Activated T-helper 2 cell treated with anti-CD3 and anti-CD28 coated beads, Interferon-gamma antibody, Interleukin-2, Interleukin-4, amounts not matched to agents 10 μg/mL and 5 μg/mL and 100 μg/mL, durations not matched to agents 14 hours and 24 hours and 36 hours (primary cell): ENCODE measurements at regions of chr16 and their contacts with region 1.

Region 1: DNA sequence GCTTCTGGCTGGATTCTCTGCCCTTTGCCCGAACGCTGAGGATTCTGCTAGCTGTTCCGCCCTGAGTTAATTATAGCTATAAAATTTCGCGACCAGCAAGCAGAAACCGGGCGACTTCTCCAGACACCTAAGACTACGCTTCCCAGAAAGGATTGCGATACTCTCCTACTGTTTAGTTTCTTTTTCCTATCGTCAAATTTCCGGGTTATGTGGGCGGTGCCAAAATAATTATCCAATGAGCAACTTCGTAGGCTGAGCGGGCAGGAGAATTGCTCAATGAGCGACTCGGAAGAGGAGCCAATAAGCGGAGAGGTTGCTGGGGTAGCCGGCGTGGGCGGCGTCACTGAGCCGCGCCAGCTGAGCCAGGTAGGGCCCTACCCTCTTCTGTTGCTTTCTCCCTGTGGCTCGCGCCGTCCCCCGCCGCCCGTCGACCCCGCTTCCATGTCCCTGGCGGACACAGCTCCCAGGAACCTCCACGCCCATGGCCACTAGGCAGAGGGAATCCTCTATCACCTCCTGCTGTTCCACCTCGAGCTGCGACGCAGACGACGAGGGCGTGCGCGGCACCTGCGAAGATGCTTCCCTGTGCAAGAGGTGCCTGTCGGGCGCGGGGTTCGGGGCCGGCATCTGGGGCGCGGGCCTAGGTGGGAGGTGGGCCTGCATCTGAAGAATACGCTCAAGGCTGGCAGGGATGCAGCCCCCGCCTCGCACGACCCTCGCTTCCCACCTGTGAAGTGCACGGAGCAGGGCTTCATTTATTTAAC is at the start of gene LCMT1:
- DNase-seq: peak; percentile 91
- H3K4me3 Mint-ChIP-seq: peak within 1 kb of the TSS; percentile 95
- H3K27ac Mint-ChIP-seq: peak within 1 kb of the TSS; percentile 98
- H3K4me1 Mint-ChIP-seq: peaks cover 45% of the 10 kb centered on the region
- H3K27me3 Mint-ChIP-seq: no peaks in the 10 kb centered on the region
- total RNA-seq, gene LCMT1: 34.1 and 38.6 TPM in 2 replicates

Region 2: GRCh38 chr16:25031441-25032307 is 79.9 kb before region 1 on chr16:
- intact Hi-C with region 1: loop called (anchors 1 kb)
- DNase-seq: peak; percentile 89
- H3K4me3 Mint-ChIP-seq: peak overlapping the region; percentile 92
- H3K27ac Mint-ChIP-seq: peak overlapping the region; percentile 99
- H3K4me1 Mint-ChIP-seq: peaks cover 30% of the 10 kb centered on the region
- H3K27me3 Mint-ChIP-seq: no peaks in the 10 kb centered on the region

Region 3: GRCh38 chr16:25066747-25067631 is 44.6 kb before region 1 on chr16:
- intact Hi-C with region 1: loop called (anchors 1 kb)
- DNase-seq: peak; percentile 77
- H3K4me3 Mint-ChIP-seq: peak overlapping the region; percentile 90
- H3K27ac Mint-ChIP-seq: peak overlapping the region; percentile 89
- H3K4me1 Mint-ChIP-seq: peaks cover 37% of the 10 kb centered on the region
- H3K27me3 Mint-ChIP-seq: peaks cover 3% of the 10 kb centered on the region

Region 4: GRCh38 chr16:25093208-25094061 is 18.1 kb before region 1 on chr16:
- intact Hi-C with region 1: loop called (anchors 1 kb)
- DNase-seq: peak; percentile 21
- H3K4me3 Mint-ChIP-seq: peak overlapping the region; percentile 28
- H3K27ac Mint-ChIP-seq: peak overlapping the region; percentile 85
- H3K4me1 Mint-ChIP-seq: peaks cover 28% of the 10 kb centered on the region
- H3K27me3 Mint-ChIP-seq: peaks cover 2% of the 10 kb centered on the region

Region 5: DNA sequence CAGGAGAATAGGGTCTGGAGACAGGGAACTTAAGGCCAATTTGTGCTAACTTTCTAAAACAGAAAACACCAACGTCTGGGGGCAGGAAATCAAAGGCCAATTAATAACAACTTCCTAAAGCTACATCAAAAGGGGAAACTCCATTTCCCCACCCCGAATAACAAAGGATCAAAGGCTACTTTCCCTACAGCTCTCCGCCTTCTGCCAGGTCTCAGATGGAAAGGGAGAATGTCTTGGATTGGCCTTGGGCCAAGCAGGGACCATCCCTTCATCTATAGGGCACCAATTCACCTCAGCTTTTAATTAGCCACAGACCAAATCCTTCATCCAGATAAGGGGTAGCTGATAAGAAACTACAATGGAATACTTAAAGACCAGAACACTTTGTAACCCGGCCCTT is 263.0 kb after region 1 on chr16:
- intact Hi-C with region 1: no loop called
- DNase-seq: no peak
- H3K4me3 Mint-ChIP-seq: no peak overlapping the region
- H3K27ac Mint-ChIP-seq: no peak overlapping the region
- H3K4me1 Mint-ChIP-seq: no peaks in the 10 kb centered on the region
- H3K27me3 Mint-ChIP-seq: no peaks in the 10 kb centered on the region